Naive thymus-derived CD4-positive, alpha-beta T cell (primary cell): ENCODE measurements at regions of chrX and their contacts with region 1.

Region 1: DNA sequence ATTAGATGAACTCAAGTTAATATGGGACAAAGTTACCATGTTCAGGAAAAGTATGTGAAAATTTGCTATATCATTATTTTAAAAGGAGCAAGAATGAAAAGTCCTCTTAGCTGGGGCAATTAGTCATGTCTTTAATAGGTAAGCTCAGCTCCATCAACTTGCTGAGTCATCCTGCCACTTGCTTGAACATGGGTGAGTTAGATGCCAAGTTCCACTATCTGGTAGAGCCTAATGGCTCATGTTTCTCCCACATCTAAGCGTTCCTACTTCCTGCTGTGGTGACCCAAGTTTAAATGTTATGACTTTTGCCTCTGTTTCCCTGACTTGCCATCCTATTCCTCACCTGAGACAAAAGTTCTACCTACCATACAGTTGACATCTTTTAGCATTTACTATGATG is 276.8 kb downstream of the ZNF674 start:
- DNase-seq: no peak
- ATAC-seq: no peak
- H3K4me3 ChIP-seq: no peak overlapping the region
- H3K4me3 Mint-ChIP-seq: no peak overlapping the region
- H3K27ac ChIP-seq: no peak overlapping the region
- H3K27ac Mint-ChIP-seq: no peak overlapping the region
- H3K4me1 ChIP-seq: no peaks in the 10 kb centered on the region
- H3K4me1 Mint-ChIP-seq: no peaks in the 10 kb centered on the region
- H3K27me3 ChIP-seq: no peaks in the 10 kb centered on the region
- H3K27me3 Mint-ChIP-seq: no peaks in the 10 kb centered on the region

Region 2: DNA sequence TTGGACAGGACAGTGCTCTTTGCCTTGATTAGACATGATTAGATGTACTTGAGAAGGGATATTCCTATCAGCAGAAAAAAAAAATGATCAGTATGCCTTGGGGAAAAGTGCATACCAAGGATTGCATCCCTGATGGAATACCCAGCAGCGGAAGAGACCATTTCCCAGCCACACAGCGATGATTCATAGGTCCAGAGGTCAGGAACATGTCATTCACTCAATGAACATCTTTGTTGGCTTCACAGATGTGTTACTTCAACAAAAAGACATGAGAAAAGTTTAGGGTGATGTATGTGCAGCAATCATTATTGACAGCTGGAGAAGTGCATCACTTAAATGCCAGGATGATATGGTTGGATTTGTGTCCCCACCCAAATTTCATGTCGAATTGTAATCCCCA is 16.7 kb before region 1 on chrX:
- CTCF ChIA-PET with region 1: no interaction called
- POLR2A ChIA-PET with region 1: no interaction called
- intact Hi-C with region 1: loop called in 1 of 2 experiments (anchors 1 kb)
- DNase-seq: no peak
- ATAC-seq: no peak
- H3K4me3 ChIP-seq: no peak overlapping the region
- H3K4me3 Mint-ChIP-seq: no peak overlapping the region
- H3K27ac ChIP-seq: no peak overlapping the region
- H3K27ac Mint-ChIP-seq: no peak overlapping the region
- H3K4me1 ChIP-seq: no peaks in the 10 kb centered on the region
- H3K4me1 Mint-ChIP-seq: peaks cover 0 to 2% (median 0%) of the 10 kb centered on the region in 7 donors
- H3K27me3 ChIP-seq: no peaks in the 10 kb centered on the region
- H3K27me3 Mint-ChIP-seq: no peaks in the 10 kb centered on the region